CD8-positive, alpha-beta memory T cell (primary cell): ENCODE measurements at regions of chr6 and their contacts with region 1.

Region 1: DNA sequence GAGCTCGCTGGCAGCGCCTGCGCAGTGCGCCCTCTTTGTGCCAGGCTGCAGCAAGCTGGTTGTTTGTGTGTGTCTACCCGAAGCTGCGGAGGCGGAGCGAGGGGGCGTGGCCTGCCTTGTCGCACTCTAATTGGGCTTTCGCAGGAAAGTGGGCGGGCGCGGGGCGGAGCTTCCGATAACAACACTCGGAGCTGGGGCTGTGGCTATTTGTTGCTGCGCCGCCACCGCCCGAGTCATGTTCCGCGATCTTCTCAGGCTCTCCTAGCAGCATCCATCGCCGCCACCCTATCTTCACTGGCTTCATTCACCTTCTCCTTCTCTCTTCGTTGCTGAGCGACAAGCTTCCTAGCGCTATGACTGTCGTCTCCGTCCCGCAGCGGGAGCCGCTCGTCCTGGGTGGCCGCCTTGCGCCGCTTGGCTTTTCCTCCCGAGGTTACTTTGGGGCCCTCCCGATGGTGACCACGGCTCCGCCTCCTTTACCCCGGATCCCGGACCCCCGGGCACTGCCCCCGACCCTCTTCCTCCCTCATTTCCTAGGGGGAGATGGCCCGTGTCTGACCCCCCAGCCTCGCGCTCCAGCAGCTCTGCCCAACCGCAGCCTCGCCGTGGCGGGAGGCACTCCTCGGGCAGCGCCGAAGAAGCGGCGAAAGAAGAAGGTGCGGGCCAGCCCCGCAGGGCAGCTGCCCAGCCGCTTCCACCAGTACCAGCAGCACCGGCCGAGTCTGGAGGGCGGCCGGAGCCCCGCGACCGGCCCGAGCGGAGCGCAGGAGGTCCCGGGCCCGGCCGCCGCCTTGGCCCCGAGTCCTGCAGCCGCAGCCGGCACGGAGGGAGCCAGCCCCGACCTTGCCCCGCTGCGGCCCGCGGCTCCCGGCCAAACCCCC is at the start of gene PNRC1:
- DNase-seq: peak; percentile 100
- H3K4me3 ChIP-seq: peak within 1 kb of the TSS; percentile 95
- H3K4me3 Mint-ChIP-seq: peak within 1 kb of the TSS; percentile 93 to 99 (median 97)
- H3K27ac ChIP-seq: peak within 1 kb of the TSS; percentile 99
- H3K27ac Mint-ChIP-seq: peak within 1 kb of the TSS; percentile 95 to 99 (median 98)
- H3K4me1 ChIP-seq: peaks cover 38% of the 10 kb centered on the region
- H3K4me1 Mint-ChIP-seq: peaks cover 41 to 53% (median 53%) of the 10 kb centered on the region in 3 donors
- H3K27me3 ChIP-seq: no peaks in the 10 kb centered on the region
- H3K27me3 Mint-ChIP-seq: peaks cover 0 to 13% of the 10 kb centered on the region in 2 donors
- total RNA-seq, gene PNRC1: 79.4 to 84.5 TPM

Region 2: DNA sequence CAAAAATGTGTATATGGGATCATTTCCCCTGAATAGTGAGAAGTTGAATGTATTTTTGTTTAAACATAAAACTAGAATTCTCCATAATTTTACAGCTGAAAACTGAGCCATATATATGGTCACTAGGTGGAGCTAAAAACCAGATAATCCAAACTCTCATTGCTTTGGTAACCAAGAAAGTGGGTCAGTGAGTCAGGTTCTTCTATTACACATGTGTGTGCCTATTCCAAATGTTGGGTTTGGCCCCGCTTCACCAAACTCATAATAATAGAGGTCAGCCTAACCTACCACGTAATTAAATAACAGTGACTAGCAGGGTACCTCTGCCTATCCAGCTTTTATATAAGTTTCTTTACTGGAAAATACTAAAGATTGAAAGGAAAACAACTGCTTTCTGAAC is 98.1 kb before region 1 on chr6:
- CTCF ChIA-PET with region 1: interaction called, 15 read pairs
- POLR2A ChIA-PET with region 1: interaction called, 14 read pairs
- DNase-seq: peak in 2 of 5 donors; percentile 47 to 54
- H3K4me3 ChIP-seq: no peak overlapping the region
- H3K4me3 Mint-ChIP-seq: no peak overlapping the region
- H3K27ac ChIP-seq: no peak overlapping the region
- H3K27ac Mint-ChIP-seq: no peak overlapping the region
- H3K4me1 ChIP-seq: peaks cover 3% of the 10 kb centered on the region
- H3K4me1 Mint-ChIP-seq: no peaks in the 10 kb centered on the region
- H3K27me3 ChIP-seq: no peaks in the 10 kb centered on the region
- H3K27me3 Mint-ChIP-seq: peaks cover 2 to 4% of the 10 kb centered on the region in 2 donors

Region 3: DNA sequence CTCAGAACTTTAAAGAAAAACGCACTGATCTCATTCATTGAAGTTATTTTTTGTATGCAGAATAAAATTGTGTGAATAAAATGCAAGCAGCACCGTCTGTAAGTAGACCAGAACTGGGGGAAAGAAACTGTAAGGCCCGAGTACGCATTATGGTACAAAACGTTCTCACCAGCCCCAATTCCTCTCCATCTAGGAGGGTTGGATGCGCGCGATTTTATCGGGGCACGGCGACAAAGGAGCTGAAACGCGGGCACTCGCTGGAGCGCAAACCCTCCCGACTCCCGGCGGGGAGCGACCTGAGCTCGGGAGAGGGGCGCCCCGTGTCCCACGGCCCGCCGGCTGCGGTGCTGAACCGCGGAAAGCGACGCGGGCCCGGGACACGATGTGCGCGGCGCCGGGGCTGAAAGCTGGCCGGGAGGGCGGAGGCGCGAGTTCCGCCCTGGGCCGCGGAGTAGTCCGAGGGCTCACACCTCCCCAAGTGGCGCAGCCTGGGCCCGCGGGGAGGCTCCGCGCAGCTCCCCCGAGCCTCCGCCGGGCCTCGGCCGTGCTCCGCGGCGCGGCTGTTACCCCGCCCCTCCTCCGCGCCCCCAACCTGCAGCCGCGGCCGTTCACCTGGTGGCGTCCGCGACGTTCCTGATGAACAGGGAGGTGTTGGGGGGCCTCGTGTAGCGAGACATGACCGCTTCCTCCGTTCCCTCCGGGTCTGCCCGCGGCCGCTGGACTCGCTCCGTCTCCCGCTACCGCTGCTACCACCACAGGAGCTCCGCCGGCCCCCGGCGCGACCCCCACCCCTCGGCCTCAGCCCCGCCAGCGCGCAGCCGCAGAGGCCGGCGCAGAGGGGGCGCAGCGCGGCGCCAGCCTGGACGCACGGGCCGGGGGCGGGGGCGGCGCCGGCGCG is 36.7 kb after region 1 on chr6 and contains the start of gene SRSF12:
- CTCF ChIA-PET with region 1: interaction called, 5 read pairs
- POLR2A ChIA-PET with region 1: interaction called, 23 read pairs
- DNase-seq: peak; percentile 7 to 58 (median 38)
- H3K4me3 ChIP-seq: peak within 1 kb of the TSS; percentile 20
- H3K4me3 Mint-ChIP-seq: peak within 1 kb of the TSS; percentile 77 to 93 (median 86)
- H3K27ac ChIP-seq: no peak within 1 kb of the TSS
- H3K27ac Mint-ChIP-seq: peak within 1 kb of the TSS in 5 of 8 donors; percentile 21 to 53 (median 29)
- H3K4me1 ChIP-seq: peaks cover 5% of the 10 kb centered on the region
- H3K4me1 Mint-ChIP-seq: peaks cover 7 to 13% (median 9%) of the 10 kb centered on the region in 3 donors
- H3K27me3 ChIP-seq: peaks cover 3% of the 10 kb centered on the region
- H3K27me3 Mint-ChIP-seq: peaks cover 2 to 6% of the 10 kb centered on the region in 2 donors
- total RNA-seq, gene SRSF12: 0.71 to 0.81 TPM

Region 4: GRCh38 chr6:89352278-89353117 is 271.7 kb after region 1 on chr6 and contains the start of gene UBE2J1:
- CTCF ChIA-PET with region 1: interaction called, 8 read pairs
- POLR2A ChIA-PET with region 1: interaction called, 59 read pairs
- DNase-seq: peak; percentile 59 to 81 (median 72)
- H3K4me3 ChIP-seq: peak within 1 kb of the TSS; percentile 69
- H3K4me3 Mint-ChIP-seq: peak within 1 kb of the TSS; percentile 92 to 99 (median 95)
- H3K27ac ChIP-seq: peak within 1 kb of the TSS; percentile 85
- H3K27ac Mint-ChIP-seq: peak within 1 kb of the TSS; percentile 93 to 98 (median 96)
- H3K4me1 ChIP-seq: peaks cover 57% of the 10 kb centered on the region
- H3K4me1 Mint-ChIP-seq: peaks cover 61 to 74% (median 69%) of the 10 kb centered on the region in 3 donors
- H3K27me3 ChIP-seq: no peaks in the 10 kb centered on the region
- H3K27me3 Mint-ChIP-seq: no peaks in the 10 kb centered on the region
- total RNA-seq, gene UBE2J1: 27.1 to 27.2 TPM